H1 (cell line): ENCODE measurements at regions of chr19 and their contacts with region 1.

Region 1: DNA sequence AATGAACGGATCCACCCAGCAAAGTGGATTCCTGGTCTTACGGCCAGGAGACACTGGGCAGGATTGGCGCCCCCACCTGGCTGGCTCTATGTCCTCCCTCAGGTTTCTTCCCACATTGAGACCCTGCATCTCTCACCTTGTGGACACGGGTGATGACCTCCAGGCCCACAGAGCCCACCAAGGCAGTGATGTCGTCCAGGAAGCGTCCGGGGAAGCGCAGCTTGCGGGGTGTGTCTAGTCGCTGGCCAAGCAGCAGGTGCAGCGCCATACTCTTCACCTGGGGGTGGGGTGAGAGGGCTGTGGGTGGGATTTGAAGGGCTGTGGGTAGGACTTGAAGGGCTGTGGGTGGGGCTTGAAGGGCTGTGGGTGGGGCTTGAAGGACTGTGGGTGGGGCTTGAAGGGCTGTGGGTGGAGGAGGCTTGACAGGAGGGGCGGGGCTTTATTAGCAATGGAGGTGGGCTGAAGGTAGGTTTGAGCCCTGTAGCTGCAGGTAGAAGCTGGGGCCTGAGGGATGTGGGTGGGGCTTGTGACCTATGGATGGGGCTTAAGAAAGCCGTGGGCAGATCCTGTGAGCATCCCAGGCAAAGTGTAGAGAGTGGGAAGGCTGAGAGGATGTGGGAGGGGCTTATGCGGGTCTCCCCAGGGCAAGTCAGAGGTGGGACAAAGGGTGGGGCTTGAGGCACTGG is 12.1 kb upstream of the ANGPTL8 start:
- DNase-seq: peak; percentile 88 to 94
- H3K4me3 ChIP-seq: no peak overlapping the region
- H3K27ac ChIP-seq: no peak overlapping the region
- H3K4me1 ChIP-seq: no peaks in the 10 kb centered on the region
- H3K27me3 ChIP-seq: no peaks in the 10 kb centered on the region
- CTCF ChIP-seq: peak; percentile 50 to 86 (median 83)
- EP300 ChIP-seq: no peak
- POLR2A ChIP-seq: no peak
- RAD21 ChIP-seq: peak; percentile 30 to 35; a peak in 2 of 4 replicates

Region 2: DNA sequence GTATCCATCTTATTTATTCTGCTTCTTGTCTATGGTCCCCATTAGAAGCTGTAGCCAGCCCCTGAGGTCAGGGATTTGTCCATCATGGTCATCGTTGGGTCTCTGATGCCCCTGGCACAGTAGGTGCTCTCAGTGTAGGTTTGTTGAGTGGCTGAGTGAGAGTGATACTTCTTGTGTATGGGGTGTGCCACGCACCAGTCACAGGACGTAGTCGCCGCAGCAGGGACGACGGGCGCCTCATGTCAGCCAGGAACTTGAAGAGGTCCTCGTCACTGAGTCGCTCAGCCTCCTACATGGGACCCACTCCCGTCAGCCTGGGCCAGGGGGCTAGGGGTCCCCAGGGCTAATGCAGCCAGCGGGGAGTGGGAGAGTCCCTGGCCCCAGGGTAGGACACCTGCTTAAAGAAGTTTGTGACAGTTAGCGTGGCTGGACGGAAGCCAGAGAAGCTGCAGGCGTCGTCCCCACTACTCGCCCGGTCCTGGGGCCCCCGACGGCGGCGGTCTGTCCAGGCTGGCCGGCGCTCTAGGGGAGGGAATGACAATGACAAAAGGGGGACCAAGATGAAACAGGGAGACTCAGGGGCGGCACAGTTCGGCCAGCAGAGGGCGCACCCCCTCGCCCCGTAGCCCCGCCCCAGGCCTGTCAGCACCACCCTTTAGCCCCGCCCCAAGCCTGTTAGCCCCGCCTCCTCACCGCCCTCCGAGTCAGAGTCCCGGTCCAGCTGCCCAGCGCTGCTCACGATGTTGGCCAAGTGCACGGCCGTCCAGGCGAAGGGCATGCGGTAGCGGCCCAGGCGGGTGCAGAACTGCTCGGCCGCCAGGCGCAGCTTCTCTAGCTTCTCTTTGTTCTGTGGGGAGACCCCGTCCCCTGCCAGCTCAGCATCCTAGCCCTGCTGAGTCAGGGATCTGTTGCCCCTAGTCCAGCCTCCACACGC is 15.8 kb after region 1 on chr19:
- CTCF ChIA-PET with region 1: interaction called, 10 read pairs
- POLR2A ChIA-PET with region 1: interaction called, 9 read pairs
- DNase-seq: peak; percentile 70 to 100
- H3K4me3 ChIP-seq: peak overlapping the region in 2 of 4 experiments; percentile 34 to 37; a peak in 5 of 8 replicates
- H3K27ac ChIP-seq: no peak overlapping the region
- H3K4me1 ChIP-seq: peaks cover 3 to 5% (median 4%) of the 10 kb centered on the region in 4 experiments; a peak in 4 of 7 replicates
- H3K27me3 ChIP-seq: no peaks in the 10 kb centered on the region
- CTCF ChIP-seq: peak; percentile 61 to 80 (median 67)
- EP300 ChIP-seq: no peak
- POLR2A ChIP-seq: 0 out of 3 replicates have a peak, but pooled peaks of 1 of the 2 experiments have one; percentile 12
- RAD21 ChIP-seq: peak; percentile 21 to 34; a peak in 2 of 4 replicates